ENCODE measurements at regions of chr3 and their contacts with region 1.

Region 1: DNA sequence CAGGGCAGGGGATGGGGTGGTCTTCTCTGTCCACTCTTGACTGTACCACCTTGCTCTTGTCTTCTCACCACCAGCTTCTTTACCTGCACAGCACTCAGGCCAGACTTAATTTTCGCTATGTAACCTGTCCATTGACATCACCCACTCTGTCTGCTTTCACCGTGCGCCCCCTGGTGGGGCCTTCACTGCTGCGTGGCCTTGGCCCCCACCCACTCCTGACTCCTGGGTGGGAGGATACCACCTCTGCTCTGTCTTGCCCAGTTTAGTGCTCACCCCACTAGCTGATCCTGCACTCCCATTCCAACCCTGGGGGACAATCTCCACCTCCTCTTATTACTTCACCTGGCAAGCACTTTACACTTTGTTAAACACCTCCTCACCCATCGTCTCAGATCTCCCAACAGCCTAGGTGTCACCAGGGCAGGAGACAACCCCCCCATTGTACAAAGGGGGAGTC is 17.7 kb downstream of the PTH1R start:
- DNase-seq: peak; percentile 82
- ATAC-seq: peak; percentile 78
- H3K4me3 ChIP-seq: no peak overlapping the region
- H3K4me3 Mint-ChIP-seq: peak overlapping the region; percentile 2
- H3K27ac ChIP-seq: no peak overlapping the region
- H3K27ac Mint-ChIP-seq: peak overlapping the region; percentile 4
- H3K4me1 ChIP-seq: peaks cover 23 to 26% of the 10 kb centered on the region in 2 donors
- H3K4me1 Mint-ChIP-seq: peaks cover 27% of the 10 kb centered on the region
- H3K27me3 ChIP-seq: peaks cover 0 to 62% (median 22%) of the 10 kb centered on the region in 4 experiments
- H3K27me3 Mint-ChIP-seq: peaks cover 53% of the 10 kb centered on the region
- CTCF ChIP-seq: peak; percentile 82

Region 2: GRCh38 chr3:45795882-45796765 is 1099.1 kb before region 1 on chr3 and contains the start of gene SLC6A20:
- CTCF ChIA-PET with region 1: no interaction called
- POLR2A ChIA-PET with region 1: no interaction called
- intact Hi-C with region 1: no loop called
- DNase-seq: peak; percentile 40
- ATAC-seq: peak; percentile 31
- H3K4me3 ChIP-seq: peak within 1 kb of the TSS in 4 of 5 experiments; percentile 21 to 49 (median 44)
- H3K4me3 Mint-ChIP-seq: peak within 1 kb of the TSS; percentile 79
- H3K27ac ChIP-seq: no peak within 1 kb of the TSS
- H3K27ac Mint-ChIP-seq: no peak within 1 kb of the TSS
- H3K4me1 ChIP-seq: peaks cover 28 to 32% of the 10 kb centered on the region in 2 donors
- H3K4me1 Mint-ChIP-seq: peaks cover 28% of the 10 kb centered on the region
- H3K27me3 ChIP-seq: peaks cover 0 to 32% (median 18%) of the 10 kb centered on the region in 4 experiments
- H3K27me3 Mint-ChIP-seq: peaks cover 43% of the 10 kb centered on the region
- CTCF ChIP-seq: no peak
- total RNA-seq, gene SLC6A20: 0.32 TPM in 1 of 2 replicates, not detected in the other

Region 3: GRCh38 chr3:46705022-46705530 is 190.2 kb before region 1 on chr3:
- CTCF ChIA-PET with region 1: interaction called, 12 read pairs
- POLR2A ChIA-PET with region 1: no interaction called
- intact Hi-C with region 1: loop called (anchors 1 kb)
- DNase-seq: peak; percentile 81
- ATAC-seq: peak; percentile 83
- H3K4me3 ChIP-seq: no peak overlapping the region
- H3K4me3 Mint-ChIP-seq: no peak overlapping the region
- H3K27ac ChIP-seq: no peak overlapping the region
- H3K27ac Mint-ChIP-seq: no peak overlapping the region
- H3K4me1 ChIP-seq: peaks cover 3 to 8% of the 10 kb centered on the region in 2 donors
- H3K4me1 Mint-ChIP-seq: peaks cover 4% of the 10 kb centered on the region
- H3K27me3 ChIP-seq: peaks cover 0 to 34% (median 12%) of the 10 kb centered on the region in 4 experiments
- H3K27me3 Mint-ChIP-seq: peaks cover 16% of the 10 kb centered on the region
- CTCF ChIP-seq: peak; percentile 97

Region 4: GRCh38 chr3:46845791-46846623 is 49.2 kb before region 1 on chr3:
- CTCF ChIA-PET with region 1: interaction called, 9 read pairs
- POLR2A ChIA-PET with region 1: no interaction called
- intact Hi-C with region 1: loop called (anchors 1 kb)
- DNase-seq: peak; percentile 86
- ATAC-seq: peak; percentile 97
- H3K4me3 ChIP-seq: peak overlapping the region; percentile 16 to 86 (median 69)
- H3K4me3 Mint-ChIP-seq: peak overlapping the region; percentile 82
- H3K27ac ChIP-seq: peak overlapping the region; percentile 45 to 71
- H3K27ac Mint-ChIP-seq: peak overlapping the region; percentile 75
- H3K4me1 ChIP-seq: peaks cover 12 to 17% of the 10 kb centered on the region in 2 donors
- H3K4me1 Mint-ChIP-seq: peaks cover 9% of the 10 kb centered on the region
- H3K27me3 ChIP-seq: no peaks in the 10 kb centered on the region
- H3K27me3 Mint-ChIP-seq: no peaks in the 10 kb centered on the region
- CTCF ChIP-seq: peak; percentile 76

Region 5: GRCh38 chr3:46866720-46867549 is 28.3 kb before region 1 on chr3:
- CTCF ChIA-PET with region 1: interaction called, 30 read pairs
- POLR2A ChIA-PET with region 1: no interaction called
- intact Hi-C with region 1: loop called (anchors 1 kb)
- DNase-seq: peak; percentile 81
- ATAC-seq: peak; percentile 64
- H3K4me3 ChIP-seq: no peak overlapping the region
- H3K4me3 Mint-ChIP-seq: no peak overlapping the region
- H3K27ac ChIP-seq: no peak overlapping the region
- H3K27ac Mint-ChIP-seq: no peak overlapping the region
- H3K4me1 ChIP-seq: no peaks in the 10 kb centered on the region
- H3K4me1 Mint-ChIP-seq: no peaks in the 10 kb centered on the region
- H3K27me3 ChIP-seq: peaks cover 0 to 13% (median 2%) of the 10 kb centered on the region in 4 experiments
- H3K27me3 Mint-ChIP-seq: peaks cover 24% of the 10 kb centered on the region
- CTCF ChIP-seq: peak; percentile 80

Measured in B cell (primary cell).